Heart right ventricle (tissue), 16 donors: ENCODE measurements at regions of chr16 and their contacts with region 1.

Region 1: DNA sequence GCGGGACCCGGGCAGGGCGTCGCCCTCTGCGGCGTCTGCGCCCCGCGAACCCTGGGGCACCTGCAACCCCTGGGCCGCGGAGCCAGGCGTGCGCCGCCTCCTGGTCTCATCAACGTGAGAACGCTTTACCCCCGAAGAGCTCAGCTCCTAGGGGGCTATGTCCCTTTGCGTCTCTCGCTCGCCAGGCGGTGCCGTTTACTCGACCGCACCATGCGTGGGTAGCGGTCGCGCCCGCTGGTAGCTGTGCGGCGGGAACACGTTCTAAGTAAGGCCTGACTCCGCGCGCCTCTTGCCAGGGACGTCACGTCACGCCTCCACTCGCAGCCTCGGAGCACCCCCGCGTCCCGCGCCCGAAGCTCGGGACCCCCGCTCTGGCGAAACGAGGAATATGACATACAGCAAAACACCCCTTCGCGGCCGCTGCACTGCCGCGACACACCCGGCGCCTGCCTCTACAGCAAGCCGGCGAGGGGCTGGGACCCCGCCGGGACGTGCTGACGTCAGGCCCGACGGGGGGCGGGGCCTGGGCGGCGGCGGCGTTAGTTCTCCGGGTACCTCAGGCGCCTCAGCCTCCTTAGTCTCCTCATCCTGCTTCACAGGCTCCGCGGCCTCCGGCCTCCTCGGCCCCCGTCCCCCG is at the start of gene RAB11FIP3:
- DNase-seq: peak; percentile 82 to 87
- ATAC-seq: peak; percentile 86 to 93 (median 88)
- H3K4me3 ChIP-seq: peak within 1 kb of the TSS; percentile 52 to 82 (median 74)
- H3K27ac ChIP-seq: peak within 1 kb of the TSS; percentile 66 to 99 (median 94)
- H3K4me1 ChIP-seq: peaks cover 0 to 54% (median 37%) of the 10 kb centered on the region in 9 donors
- H3K27me3 ChIP-seq: peaks cover 0 to 6% (median 0%) of the 10 kb centered on the region in 7 donors
- CTCF ChIP-seq: peak in 5 of 9 donors; percentile 18 to 52 (median 48)
- total RNA-seq, gene RAB11FIP3: 16.6 to 40.3 (median 30.4) TPM

Region 2: DNA sequence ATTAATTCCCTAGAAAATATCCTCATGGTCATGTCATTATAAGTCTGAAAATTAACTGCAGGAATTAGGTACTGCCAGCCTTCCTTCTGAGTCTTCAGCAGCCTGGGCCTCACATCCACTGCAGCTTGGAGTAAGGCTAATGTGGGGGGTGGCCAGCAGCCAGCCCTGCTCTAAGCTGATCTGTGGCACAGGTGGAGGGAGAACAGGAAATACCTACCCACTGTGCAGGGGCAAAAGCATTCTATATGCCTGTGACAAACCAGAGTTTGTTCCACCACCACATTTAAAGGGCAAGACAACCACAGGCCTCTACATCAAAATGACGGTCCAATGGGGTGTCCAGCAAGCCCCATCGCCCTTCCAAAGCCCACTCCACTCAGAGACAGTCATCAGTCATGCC is 296.1 kb before region 1 on chr16:
- intact Hi-C with region 1: no loop called
- DNase-seq: no peak
- ATAC-seq: no peak
- H3K4me3 ChIP-seq: no peak overlapping the region
- H3K27ac ChIP-seq: no peak overlapping the region
- H3K4me1 ChIP-seq: no peaks in the 10 kb centered on the region
- H3K27me3 ChIP-seq: no peaks in the 10 kb centered on the region
- CTCF ChIP-seq: no peak

Region 3: GRCh38 chr16:401468-402348 is 23.5 kb before region 1 on chr16 and contains the start of gene DECR2:
- intact Hi-C with region 1: loop called in 3 of 10 experiments (anchors 1 to 2 kb)
- DNase-seq: peak; percentile 96 to 98
- ATAC-seq: peak; percentile 89 to 93 (median 91)
- H3K4me3 ChIP-seq: peak within 1 kb of the TSS; percentile 53 to 97 (median 84)
- H3K27ac ChIP-seq: peak within 1 kb of the TSS; percentile 51 to 97 (median 92)
- H3K4me1 ChIP-seq: peaks cover under 1 to 33% (median 21%) of the 10 kb centered on the region in 9 donors
- H3K27me3 ChIP-seq: no peaks in the 10 kb centered on the region
- CTCF ChIP-seq: peak in 8 of 9 donors; percentile 24 to 83 (median 58)
- total RNA-seq, gene DECR2: 7.0 to 17.4 (median 11.6) TPM

Region 4: DNA sequence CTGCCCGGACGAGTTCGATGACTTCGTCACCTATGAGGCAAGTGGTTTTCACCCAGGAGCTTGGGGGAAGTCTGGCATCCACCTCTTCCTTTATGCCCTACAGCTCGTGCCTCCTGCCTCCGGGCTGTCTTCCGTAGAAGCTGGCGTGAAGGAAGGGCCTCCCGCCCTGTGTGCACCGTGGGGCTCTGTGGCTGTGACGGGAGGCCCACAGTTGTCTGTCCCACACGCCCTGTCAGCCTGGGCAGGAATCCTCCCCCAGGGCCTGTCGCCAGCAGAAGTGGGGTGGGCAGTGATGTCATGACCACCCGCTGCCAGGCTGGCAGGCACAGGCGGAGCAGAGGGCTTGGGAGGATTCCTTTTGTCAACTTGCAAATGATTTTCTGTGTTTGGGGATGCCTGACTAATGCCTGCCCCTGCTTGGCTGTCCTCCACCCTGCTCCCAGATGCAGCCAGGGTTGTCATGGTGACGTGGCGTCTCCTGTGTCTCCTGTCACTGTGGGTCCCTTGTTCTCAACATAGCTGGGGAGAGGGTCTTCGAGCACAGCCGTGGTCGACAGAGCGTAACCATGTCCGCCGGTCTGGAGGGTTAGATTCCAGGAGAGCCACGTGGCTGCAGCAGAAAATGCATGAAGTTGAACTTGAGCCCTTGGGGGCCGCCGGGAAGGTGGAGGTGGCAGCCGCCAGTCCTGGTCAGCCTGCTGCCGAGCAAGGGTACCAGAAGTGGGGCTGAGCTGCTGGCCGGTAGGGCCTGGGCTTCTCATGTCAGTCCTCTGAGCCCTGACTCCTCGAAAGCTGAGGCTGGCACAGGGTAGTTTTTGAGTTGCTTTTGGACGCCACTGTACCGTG is 46.4 kb after region 1 on chr16:
- intact Hi-C with region 1: loop called in 3 of 10 experiments (anchors 5 to 10 kb)
- DNase-seq: peak in 1 of 2 donors; percentile 23
- ATAC-seq: peak; percentile 30 to 88 (median 69)
- H3K4me3 ChIP-seq: no peak overlapping the region
- H3K27ac ChIP-seq: peak overlapping the region in 1 of 10 donors; percentile 39
- H3K4me1 ChIP-seq: peaks cover 0 to 23% (median 3%) of the 10 kb centered on the region in 9 donors
- H3K27me3 ChIP-seq: no peaks in the 10 kb centered on the region
- CTCF ChIP-seq: no peak

Region 5: DNA sequence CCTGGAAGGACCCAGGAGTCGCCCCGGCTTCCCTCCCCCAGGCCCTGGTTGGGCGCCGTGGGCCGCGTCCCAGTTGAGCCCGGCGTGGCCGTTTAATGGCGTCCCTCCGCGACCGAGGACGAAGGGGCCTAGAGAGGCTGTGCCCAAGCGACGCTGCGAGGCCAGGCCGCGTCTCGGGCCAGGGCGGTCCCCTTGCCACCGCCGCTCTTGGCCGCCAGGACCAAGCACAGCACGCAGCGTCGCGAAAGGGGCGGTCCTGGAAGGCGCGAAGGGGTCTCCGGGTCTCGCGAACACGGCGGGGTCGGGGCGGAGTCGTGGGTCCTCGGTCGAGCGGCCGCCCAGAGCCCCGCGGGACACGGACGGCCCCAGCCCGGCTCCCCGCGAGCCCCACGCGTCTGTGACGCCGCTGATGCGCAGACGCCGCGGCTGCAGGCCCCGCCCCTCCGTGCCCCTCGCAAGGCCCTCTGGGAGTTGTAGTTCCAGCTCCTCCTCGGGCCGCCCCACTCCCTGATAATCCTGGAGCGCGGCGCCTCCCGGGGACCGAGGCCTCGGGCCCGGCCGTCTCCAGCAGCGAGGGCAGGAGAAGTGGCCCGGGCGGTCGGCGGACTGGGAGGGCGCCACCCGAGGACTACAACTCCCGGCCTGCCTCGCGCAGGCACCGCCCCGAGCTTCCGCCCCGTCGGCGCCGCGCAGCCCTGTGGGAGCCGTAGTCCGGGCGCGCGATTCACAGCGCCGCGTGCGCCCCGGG is 102.0 kb after region 1 on chr16 and contains the start of gene CAPN15:
- intact Hi-C with region 1: loop called in 1 of 10 experiments (anchors 5 kb)
- DNase-seq: peak; percentile 84 to 89
- ATAC-seq: peak; percentile 83 to 92 (median 88)
- H3K4me3 ChIP-seq: peak within 1 kb of the TSS; percentile 64 to 96 (median 82)
- H3K27ac ChIP-seq: peak within 1 kb of the TSS; percentile 87 to 100 (median 99)
- H3K4me1 ChIP-seq: peaks cover 17 to 61% (median 43%) of the 10 kb centered on the region in 9 donors
- H3K27me3 ChIP-seq: no peaks in the 10 kb centered on the region
- CTCF ChIP-seq: peak in 4 of 9 donors; percentile 18 to 33 (median 26)
- total RNA-seq, gene CAPN15: 11.1 to 23.4 (median 15.3) TPM

Region 6: DNA sequence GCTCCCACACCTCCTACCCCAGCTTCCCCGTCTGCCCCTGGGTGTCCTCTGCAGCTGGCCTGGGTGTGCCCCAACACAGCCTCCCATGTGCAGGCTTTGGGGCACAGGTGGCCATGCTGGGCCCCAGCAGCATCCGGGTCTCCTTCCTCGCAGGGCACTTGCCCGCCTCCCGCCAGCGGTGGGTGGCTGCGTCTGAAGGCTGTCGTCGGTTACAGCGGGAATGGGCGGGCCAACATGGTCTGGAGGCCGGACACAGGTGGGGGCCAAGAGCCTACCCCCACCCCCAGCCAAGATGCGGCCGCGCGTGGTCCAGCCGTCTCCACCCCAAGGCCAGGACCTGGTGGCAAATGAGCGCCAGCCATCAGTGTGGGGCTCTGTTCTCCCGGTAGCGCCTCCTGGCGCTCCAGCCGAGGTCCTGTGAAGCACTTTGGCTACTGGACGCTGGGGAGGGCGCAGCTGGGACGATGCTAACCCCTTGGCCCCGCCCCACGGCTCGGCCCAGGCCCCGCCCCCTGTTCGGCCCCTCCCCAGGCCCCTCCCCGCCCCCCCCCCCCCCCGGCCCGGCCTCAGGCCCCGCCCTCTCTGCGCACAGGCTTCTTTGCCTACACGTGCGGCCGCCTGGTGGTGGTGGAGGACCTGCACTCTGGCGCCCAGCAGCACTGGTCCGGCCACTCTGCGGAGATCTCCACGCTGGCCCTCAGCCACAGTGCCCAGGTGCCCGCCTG is 235.4 kb after region 1 on chr16:
- intact Hi-C with region 1: no loop called
- DNase-seq: peak; percentile 87 to 89
- ATAC-seq: peak; percentile 74 to 92 (median 86)
- H3K4me3 ChIP-seq: peak overlapping the region in 6 of 10 donors; percentile 31 to 45 (median 40)
- H3K27ac ChIP-seq: peak overlapping the region in 9 of 10 donors; percentile 35 to 77 (median 64)
- H3K4me1 ChIP-seq: peaks cover 0 to 16% (median 12%) of the 10 kb centered on the region in 9 donors
- H3K27me3 ChIP-seq: no peaks in the 10 kb centered on the region
- CTCF ChIP-seq: peak; percentile 20 to 79 (median 63)